ENCODE measurements at regions of chr1 and their contacts with region 1.

Region 1: DNA sequence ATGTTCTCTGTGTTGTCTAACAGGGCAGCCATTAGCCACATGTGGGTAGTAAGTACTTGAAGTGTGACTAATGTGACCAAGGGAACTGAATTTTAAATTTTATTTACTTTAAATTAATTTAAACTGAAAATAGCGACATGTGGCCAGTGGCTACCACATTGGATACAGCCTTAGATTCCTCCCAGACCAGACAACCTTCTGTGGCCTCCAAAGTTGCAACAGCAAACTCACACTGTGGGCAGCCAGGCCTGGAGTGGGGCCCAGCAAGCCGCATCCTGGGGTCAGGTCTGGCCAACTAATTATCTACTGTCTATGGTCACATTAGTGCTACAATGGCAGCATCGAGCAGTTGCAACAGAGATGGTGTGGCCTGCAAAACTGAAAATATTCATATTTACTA is 11.7 kb downstream of the EIF2D start:
- DNase-seq: no peak
- H3K4me3 Mint-ChIP-seq: no peak overlapping the region
- H3K27ac Mint-ChIP-seq: no peak overlapping the region
- H3K4me1 Mint-ChIP-seq: no peaks in the 10 kb centered on the region
- H3K27me3 Mint-ChIP-seq: no peaks in the 10 kb centered on the region

Region 2: DNA sequence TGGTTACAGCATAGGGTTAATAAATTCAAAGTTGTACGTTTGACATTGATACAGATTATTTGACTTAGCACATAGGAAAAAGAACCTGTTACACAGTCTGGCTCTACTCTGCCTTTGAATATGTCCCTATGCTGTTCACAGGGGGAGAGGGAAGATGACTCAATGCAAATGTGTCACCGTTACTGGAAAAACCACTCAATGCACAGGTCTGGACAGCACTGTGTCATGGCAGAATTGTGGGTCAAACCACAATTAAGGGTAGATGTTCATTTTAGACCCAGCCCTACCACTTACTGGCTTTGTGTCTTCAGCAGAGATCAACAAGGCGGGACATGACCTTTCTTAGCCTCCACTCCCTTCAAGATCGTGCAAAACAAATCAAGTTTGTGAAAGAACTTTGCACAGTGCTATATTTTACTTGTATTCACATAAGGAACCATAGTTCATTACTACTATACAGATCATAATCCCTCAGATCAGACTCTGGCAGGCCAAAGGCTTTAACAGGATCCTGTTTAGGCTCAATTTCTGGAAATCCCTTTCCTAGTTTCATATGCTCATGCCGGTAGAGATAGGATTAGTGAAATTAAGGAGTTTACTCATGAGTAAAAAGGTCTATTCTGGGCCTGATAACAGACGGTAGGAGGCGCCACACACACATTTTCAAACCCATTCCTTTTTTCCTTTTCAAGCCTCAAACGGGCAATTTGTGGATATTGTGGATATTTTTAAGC is 10.3 kb before region 1 on chr1:
- CTCF ChIA-PET with region 1: interaction called, 10 read pairs
- intact Hi-C with region 1: no loop called
- DNase-seq: peak; percentile 89
- H3K4me3 Mint-ChIP-seq: peak overlapping the region; percentile 52
- H3K27ac Mint-ChIP-seq: peak overlapping the region; percentile 100
- H3K4me1 Mint-ChIP-seq: peaks cover 72% of the 10 kb centered on the region
- H3K27me3 Mint-ChIP-seq: no peaks in the 10 kb centered on the region